Gastrocnemius medialis (tissue), 4 donors: ENCODE measurements at regions of chr3 and their contacts with region 1.

Region 1: GRCh38 chr3:177333533-177334520 is 136.5 kb upstream of the TBL1XR1 start:
- DNase-seq: peak; percentile 13 to 54
- ATAC-seq: peak; percentile 85 to 88
- H3K4me3 ChIP-seq: no peak overlapping the region
- H3K27ac ChIP-seq: peak overlapping the region; percentile 69 to 73 (median 70)
- H3K4me1 ChIP-seq: peaks cover 33 to 46% of the 10 kb centered on the region in 2 donors
- H3K27me3 ChIP-seq: no peaks in the 10 kb centered on the region
- CTCF ChIP-seq: no peak
- POLR2A ChIP-seq: no peak

Region 2: DNA sequence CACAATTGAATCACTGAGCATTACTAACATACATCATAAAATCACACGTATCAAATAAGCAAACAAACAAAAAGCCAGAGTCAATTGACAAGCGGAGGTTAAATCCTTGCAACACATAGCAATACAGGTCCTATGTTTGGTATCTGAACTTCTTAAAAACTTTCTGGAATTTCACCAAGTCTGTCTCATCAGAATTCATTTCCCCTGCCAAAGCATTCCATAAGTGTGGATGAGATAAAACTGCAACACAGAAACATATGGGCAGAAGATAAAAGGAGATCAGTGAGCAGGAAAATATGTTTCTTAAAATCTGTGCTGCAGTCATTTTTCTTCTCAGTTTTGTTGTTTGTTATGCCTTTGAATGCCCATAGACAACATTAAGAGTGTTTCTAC is 1292.0 kb before region 1 on chr3:
- in situ Hi-C with region 1: no loop called
- intact Hi-C with region 1: no loop called
- DNase-seq: no peak
- ATAC-seq: no peak
- H3K4me3 ChIP-seq: no peak overlapping the region
- H3K27ac ChIP-seq: no peak overlapping the region
- H3K4me1 ChIP-seq: no peaks in the 10 kb centered on the region
- H3K27me3 ChIP-seq: no peaks in the 10 kb centered on the region
- CTCF ChIP-seq: no peak
- POLR2A ChIP-seq: no peak

Region 3: GRCh38 chr3:177294221-177294620 is 39.6 kb before region 1 on chr3:
- in situ Hi-C with region 1: no loop called
- intact Hi-C with region 1: loop called (anchors 1 kb)
- DNase-seq: peak; percentile 82 to 85
- ATAC-seq: peak; percentile 99 to 100
- H3K4me3 ChIP-seq: no peak overlapping the region
- H3K27ac ChIP-seq: peak overlapping the region; percentile 69 to 91 (median 80)
- H3K4me1 ChIP-seq: peaks cover 22 to 31% of the 10 kb centered on the region in 2 donors
- H3K27me3 ChIP-seq: no peaks in the 10 kb centered on the region
- CTCF ChIP-seq: no peak
- POLR2A ChIP-seq: no peak